ENCODE measurements at regions of chr1 and their contacts with region 1.

Region 1: DNA sequence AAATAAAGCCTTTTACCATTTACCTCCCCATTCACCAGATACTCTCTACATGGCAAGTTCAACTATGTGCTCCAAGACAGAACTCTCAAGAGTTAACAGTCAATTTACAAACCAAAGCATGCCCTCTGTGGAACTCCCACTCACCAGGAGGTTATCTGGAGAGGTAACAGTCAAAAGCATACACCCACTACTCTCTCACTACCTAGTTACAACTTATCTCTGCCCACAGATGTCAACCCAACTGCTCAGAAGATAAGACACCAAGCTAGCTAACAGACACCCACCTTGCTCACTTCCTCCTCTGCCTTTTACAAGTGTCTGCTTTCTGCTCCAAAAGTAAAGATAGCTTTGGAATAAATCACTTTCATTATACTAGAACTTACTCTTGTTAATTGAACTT is 131.0 kb downstream of the TRIM33 start:
- DNase-seq: peak; percentile 87 to 98 (median 92)
- ATAC-seq: peak; percentile 99
- H3K4me3 ChIP-seq: no peak overlapping the region
- H3K27ac ChIP-seq: peak overlapping the region; percentile 50; the same call in 1 of the 3 replicates
- H3K4me1 ChIP-seq: peaks cover 6 to 12% of the 10 kb centered on the region in 2 experiments; a peak in 4 of 5 replicates
- H3K27me3 ChIP-seq: no peaks in the 10 kb centered on the region; a peak in 1 of 5 replicates
- CTCF ChIP-seq: no peak
- EP300 ChIP-seq: peak; percentile 100
- POLR2A ChIP-seq: no peak
- RAD21 ChIP-seq: peak in 1 of 2 experiments; percentile 42; a peak in 2 of 4 replicates

Region 2: DNA sequence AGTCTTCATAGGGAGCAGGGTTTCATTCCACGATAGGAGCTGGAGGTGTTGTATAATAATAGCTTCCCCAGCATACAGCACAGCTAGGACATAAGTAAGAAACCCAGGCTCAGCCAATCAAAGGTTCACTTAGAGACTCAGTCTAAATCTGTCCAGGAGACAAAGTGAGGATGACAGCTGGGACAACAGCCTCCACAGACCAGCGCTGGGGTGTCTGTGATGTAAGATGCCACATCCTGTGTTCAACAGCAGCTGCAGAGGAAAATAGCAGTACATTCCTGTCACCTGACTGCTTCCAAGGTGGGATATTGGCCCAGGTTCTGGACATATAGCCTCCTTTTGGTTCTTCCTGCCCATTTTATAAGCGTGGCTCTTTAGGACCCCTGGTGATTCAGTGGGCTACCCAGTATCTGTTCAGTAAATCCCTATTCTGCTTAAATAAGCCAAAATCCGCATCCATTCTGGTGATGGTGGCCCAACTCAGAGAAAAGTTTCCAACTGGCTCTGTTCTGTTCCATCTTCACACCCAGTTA is 49.5 kb before region 1 on chr1:
- CTCF ChIA-PET with region 1: no interaction called
- POLR2A ChIA-PET with region 1: no interaction called
- in situ Hi-C with region 1: no loop called
- intact Hi-C with region 1: no loop called
- DNase-seq: no peak
- ATAC-seq: no peak
- H3K4me3 ChIP-seq: no peak overlapping the region
- H3K27ac ChIP-seq: no peak overlapping the region
- H3K4me1 ChIP-seq: no peaks in the 10 kb centered on the region
- H3K27me3 ChIP-seq: peaks cover 2 to 8% of the 10 kb centered on the region in 2 experiments; a peak in 4 of 5 replicates
- CTCF ChIP-seq: no peak
- EP300 ChIP-seq: no peak
- POLR2A ChIP-seq: no peak
- RAD21 ChIP-seq: no peak

Region 3: DNA sequence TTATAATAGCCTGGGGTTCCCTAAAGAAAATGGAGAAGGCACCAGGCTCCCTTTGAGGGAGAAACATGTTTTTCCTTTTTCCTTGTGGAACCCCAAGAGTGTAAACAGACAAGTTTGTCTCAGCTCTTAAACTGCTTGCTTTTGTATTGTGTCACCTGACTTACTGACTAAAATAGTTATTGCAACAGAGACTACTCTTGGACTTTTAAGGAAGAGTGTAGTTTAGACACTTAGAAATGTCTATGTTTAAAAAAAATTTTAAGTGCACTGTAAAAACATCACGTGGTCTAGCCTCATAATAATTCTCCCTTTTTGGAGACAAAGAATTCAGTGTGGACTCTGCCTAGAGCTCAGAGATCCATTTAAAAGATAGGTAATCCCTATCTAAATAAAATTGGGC is 10.1 kb before region 1 on chr1:
- CTCF ChIA-PET with region 1: no interaction called
- POLR2A ChIA-PET with region 1: interaction called, 14 read pairs
- in situ Hi-C with region 1: no loop called
- intact Hi-C with region 1: no loop called
- DNase-seq: peak in 1 of 4 experiments; percentile 40
- ATAC-seq: no peak; the same call in 1 of the 3 replicates
- H3K4me3 ChIP-seq: no peak overlapping the region
- H3K27ac ChIP-seq: peak overlapping the region; percentile 31; the same call in 1 of the 3 replicates
- H3K4me1 ChIP-seq: peaks cover 4 to 8% of the 10 kb centered on the region in 2 experiments; a peak in 3 of 5 replicates
- H3K27me3 ChIP-seq: no peaks in the 10 kb centered on the region
- CTCF ChIP-seq: peak in 1 of 3 experiments; percentile 9; a peak in 1 of 6 replicates
- EP300 ChIP-seq: no peak
- POLR2A ChIP-seq: no peak
- RAD21 ChIP-seq: no peak

Region 4: GRCh38 chr1:114418247-114418646 is 38.3 kb after region 1 on chr1:
- CTCF ChIA-PET with region 1: no interaction called
- POLR2A ChIA-PET with region 1: no interaction called
- in situ Hi-C with region 1: no loop called
- intact Hi-C with region 1: loop called (anchors 5 kb)
- DNase-seq: no peak
- ATAC-seq: no peak
- H3K4me3 ChIP-seq: no peak overlapping the region
- H3K27ac ChIP-seq: no peak overlapping the region
- H3K4me1 ChIP-seq: no peaks in the 10 kb centered on the region
- H3K27me3 ChIP-seq: no peaks in the 10 kb centered on the region
- CTCF ChIP-seq: no peak
- EP300 ChIP-seq: no peak
- POLR2A ChIP-seq: no peak
- RAD21 ChIP-seq: no peak

Region 5: DNA sequence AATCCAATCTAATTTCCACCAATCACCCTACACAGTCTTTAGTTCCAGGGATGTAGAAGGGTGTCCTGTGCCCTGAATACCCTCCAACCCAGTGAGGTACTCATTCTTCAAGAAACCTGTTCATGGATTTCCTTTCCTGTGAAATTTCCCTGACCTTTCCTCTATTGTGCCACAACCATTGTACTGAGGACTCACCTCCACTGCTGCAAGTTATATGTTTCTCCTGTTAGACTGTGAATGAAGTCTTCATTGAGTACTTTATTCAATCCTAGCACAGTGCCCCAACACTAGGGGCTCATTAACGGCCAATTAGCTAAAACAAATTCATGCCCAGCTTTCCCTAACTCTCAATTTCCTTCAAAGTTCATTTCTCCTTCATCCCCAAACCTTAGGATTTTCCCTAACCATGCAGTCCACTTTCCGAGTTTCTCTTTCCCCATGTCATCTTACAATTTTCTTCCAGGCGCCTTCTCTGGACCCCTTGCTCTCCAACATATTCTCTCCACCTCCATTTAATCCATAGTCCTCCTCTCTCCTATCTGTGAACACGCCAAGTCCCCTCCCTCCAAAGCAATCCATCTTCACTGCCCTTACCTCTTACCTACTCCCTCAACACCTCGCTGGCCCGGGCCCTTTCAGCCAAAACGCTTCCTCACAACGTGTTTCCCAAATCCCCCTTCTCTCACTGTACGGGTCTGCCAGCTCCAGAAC is 129.7 kb after region 1 on chr1:
- CTCF ChIA-PET with region 1: no interaction called
- POLR2A ChIA-PET with region 1: no interaction called
- in situ Hi-C with region 1: no loop called
- intact Hi-C with region 1: loop called (anchors 5 kb)
- DNase-seq: no peak
- ATAC-seq: peak; percentile 13
- H3K4me3 ChIP-seq: peak overlapping the region; percentile 86
- H3K27ac ChIP-seq: peak overlapping the region; percentile 92
- H3K4me1 ChIP-seq: peaks cover 30 to 41% of the 10 kb centered on the region in 2 experiments
- H3K27me3 ChIP-seq: no peaks in the 10 kb centered on the region
- CTCF ChIP-seq: no peak
- EP300 ChIP-seq: no peak
- POLR2A ChIP-seq: no peak
- RAD21 ChIP-seq: no peak